ENCODE measurements at regions of chr3 and their contacts with region 1.

Region 1: DNA sequence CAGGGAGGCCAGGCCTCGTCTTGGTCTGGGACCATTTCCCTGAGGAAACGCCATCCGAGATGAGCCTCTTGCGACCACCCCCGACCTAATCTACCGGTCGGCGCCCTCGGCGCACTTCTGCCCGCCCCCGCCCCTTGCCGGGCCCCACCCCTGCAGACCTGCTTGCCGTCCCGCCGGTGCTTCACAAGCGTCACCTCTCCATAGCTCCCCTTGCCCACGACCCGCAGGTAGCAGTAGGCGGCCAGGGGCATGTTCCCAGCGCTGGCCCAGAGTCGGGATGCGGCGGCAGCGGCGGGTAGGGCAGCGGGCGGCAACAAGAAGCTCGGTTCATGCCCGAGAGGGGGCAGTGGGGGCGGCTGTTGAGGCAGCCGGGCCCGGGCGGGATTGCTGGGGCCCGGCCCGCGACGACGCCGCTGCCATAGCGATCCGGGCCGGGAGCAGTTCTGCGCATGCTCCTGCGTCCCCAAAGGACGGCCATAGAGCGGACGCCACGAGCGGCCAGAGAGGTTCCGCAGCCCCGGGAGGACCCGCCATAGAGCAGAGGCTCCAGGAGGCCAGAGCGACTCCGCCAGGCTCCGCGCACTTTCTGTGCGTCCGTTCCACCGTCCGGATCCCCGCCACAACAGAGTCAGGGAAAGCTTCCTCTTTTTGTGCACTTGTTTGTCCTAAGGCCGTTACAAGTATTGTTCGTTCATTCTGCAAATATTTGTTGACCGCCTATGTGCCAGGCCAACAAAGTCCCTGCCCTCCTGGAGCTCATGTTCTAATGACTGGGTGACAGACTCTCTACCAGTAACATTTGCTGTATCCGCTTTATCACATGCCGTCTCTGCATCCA is at the start of gene NEK4:
- DNase-seq: peak; percentile 91
- H3K4me3 Mint-ChIP-seq: peak within 1 kb of the TSS; percentile 96
- H3K27ac Mint-ChIP-seq: peak within 1 kb of the TSS; percentile 93
- H3K4me1 Mint-ChIP-seq: peaks cover 20% of the 10 kb centered on the region
- H3K27me3 Mint-ChIP-seq: no peaks in the 10 kb centered on the region
- total RNA-seq, gene NEK4: 12.8 to 15.3 TPM

Region 2: DNA sequence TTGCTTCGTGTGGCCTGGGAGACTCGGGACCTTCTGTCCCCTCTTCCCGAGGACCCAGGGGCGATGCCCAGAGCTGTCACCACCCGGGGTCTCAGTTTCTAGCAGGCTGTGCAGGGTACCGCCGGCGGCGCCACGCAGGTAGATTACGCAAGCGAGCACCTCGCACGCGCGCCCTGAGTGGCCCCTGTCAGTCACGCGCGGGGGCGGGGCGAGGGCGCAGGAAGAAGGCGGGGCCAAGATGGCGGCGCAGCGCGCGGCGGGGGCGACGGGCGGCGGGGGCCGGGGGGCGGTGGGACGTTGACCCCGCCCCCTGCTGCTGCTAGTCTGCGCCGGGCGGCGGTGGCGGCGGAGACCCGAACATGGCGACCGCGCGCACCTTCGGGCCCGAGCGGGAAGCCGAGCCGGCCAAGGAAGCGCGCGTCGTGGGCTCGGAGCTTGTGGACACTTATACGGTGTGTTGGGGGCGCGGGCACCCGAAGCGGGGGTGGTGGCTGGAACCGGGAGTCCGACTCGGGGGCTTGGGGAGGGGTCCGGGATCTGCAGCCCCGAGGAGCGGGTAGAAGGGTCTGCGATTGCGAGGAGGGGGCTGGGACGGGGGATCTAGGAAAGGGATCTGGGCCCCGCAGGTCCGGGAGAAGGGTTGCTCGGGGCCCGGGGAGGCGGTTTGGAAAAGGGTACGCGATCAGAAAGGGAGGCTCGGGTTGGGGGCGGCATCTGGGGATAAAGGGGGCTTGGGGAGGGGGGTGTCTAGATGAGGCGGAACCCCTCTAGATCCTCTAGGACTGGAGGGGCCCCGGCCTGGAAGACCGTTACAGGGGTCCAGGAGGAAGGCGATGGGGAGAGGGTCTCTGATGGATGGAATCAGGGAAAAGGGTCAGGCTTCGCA is 315.2 kb before region 1 on chr3 and contains the start of gene NISCH:
- CTCF ChIA-PET with region 1: no interaction called
- intact Hi-C with region 1: loop called (anchors 5 kb)
- DNase-seq: peak; percentile 96
- H3K4me3 Mint-ChIP-seq: peak within 1 kb of the TSS; percentile 94
- H3K27ac Mint-ChIP-seq: peak within 1 kb of the TSS; percentile 96
- H3K4me1 Mint-ChIP-seq: peaks cover 35% of the 10 kb centered on the region
- H3K27me3 Mint-ChIP-seq: no peaks in the 10 kb centered on the region
- total RNA-seq, gene NISCH: 50.4 to 52.5 TPM

Region 3: DNA sequence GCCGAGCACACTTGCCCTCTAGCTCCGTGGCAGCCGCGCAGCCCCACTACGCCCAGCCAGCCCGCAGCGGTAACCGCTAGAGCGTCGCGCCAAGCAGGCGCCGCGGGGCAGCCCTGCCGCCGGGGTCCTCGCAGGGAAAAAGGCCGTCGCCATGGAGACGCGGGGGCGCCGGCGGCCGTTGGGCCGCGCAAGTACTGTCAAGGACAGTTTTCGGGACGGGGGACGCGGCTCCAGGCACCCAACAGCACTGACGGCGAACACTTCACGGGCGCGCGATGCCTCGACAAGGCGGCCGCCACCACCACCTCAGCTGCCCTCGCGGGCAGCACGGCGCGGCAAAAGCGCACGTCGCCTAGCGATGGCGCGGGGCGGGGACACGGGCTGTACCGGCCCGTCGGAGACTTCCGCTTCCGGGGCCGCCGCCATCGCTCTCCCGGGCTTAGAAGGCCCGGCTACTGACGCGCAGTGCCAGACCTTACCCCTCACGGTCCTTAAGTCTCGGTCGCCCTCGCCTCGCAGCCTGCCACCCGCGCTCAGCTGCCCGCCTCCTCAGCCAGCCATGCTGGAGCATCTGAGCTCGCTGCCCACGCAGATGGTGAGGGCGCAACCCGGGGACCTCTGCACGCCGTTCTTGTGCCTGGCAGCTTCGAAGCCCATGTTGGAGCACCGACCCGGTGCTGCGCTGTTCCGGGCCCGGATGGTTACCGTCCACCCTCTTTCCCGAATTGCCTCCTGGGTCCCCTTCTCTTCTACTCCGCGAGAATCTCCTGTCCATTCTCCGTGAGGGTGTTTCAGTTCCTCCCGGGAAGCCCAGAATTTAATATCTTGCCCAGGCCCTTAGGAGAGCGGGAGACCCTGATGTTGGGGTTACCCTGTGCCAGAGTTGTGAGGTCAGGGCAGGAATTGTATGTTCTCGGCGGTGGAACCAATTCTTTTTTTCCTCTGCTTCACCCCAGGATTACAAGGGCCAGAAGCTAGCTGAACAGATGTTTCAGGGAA is 64.7 kb before region 1 on chr3 and contains the starts of genes GLT8D1 and SPCS1:
- CTCF ChIA-PET with region 1: no interaction called
- intact Hi-C with region 1: loop called (anchors 1 kb)
- DNase-seq: peak; percentile 84
- H3K4me3 Mint-ChIP-seq: peak within 1 kb of the TSS; percentile 94
- H3K27ac Mint-ChIP-seq: peak within 1 kb of the TSS; percentile 88
- H3K4me1 Mint-ChIP-seq: peaks cover 31% of the 10 kb centered on the region
- H3K27me3 Mint-ChIP-seq: no peaks in the 10 kb centered on the region
- total RNA-seq, gene GLT8D1: 24.5 to 25.4 TPM
- total RNA-seq, gene SPCS1: 118 to 123 TPM

Region 4: DNA sequence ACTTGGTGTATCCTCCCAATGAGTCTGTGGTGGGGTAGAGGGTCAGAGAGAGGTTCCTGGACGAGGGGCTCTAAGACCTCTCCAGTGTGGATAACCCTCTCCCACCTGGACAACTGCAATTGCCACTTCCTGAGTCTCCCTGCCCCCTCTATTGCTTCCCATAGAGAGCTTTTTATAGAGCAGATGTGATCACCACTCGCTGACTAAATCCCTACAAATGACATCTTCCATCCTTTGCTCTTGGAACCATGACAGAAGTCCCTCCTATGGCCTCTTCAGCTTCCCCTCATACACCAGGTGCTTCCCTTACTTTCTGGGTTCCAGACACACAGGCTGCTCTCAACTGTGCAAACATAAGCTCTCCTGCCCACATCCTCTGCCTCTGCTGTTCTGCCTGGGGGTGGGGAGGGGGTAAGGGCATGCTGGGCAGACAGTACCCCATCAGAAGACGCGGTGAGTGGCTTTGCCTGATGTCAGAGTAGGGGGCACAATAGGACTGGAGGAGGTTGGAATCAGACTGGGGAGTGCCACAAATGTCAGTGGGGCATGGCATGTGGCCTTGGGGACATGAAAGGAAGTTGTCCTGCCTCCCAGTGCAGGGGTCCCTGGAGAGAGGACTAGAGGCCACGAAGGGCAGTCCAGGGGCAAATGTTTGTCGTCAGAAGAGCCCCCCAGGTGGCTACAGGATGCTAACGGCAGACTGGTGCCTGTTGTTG is 39.1 kb after region 1 on chr3:
- CTCF ChIA-PET with region 1: no interaction called
- intact Hi-C with region 1: no loop called
- DNase-seq: no peak
- H3K4me3 Mint-ChIP-seq: no peak overlapping the region
- H3K27ac Mint-ChIP-seq: no peak overlapping the region
- H3K4me1 Mint-ChIP-seq: peaks cover 4% of the 10 kb centered on the region
- H3K27me3 Mint-ChIP-seq: no peaks in the 10 kb centered on the region

Measured in activated naive CD4-positive, alpha-beta T cell treated with anti-CD3 and anti-CD28 coated beads for 36 hours (primary cell).